ENCODE measurements at regions of chr15 and their contacts with region 1.

Region 1: DNA sequence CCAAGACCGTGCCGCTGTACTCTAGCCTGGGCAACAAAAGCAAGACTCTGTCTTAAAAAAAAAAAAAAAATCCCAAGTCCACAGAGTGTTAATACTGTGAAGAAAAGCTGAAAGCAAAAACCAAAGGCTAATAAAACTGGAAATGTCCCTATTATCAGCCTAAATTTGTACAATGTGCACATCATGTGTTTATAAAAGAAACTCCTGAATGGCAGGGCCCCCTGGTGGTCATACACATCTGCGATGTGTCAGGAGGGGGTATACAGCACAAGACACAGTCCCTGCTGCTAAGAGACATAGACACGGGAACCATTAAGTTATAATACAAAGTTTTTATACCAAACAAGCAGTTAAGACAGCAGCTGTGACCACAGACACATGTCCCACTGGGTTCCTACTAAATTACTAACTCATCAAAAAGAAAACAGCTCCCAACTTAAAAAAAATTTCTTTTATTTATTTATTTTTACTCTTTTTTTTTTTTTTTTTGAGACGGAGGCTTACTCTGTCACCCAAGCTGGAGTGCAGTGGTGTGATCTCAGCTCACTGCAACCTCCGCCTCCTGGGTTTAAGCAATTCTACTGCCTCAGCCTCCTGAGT is 31.0 kb downstream of the IDH2 start:
- DNase-seq: peak; percentile 82
- CTCF ChIP-seq: peak; percentile 63

Region 2: DNA sequence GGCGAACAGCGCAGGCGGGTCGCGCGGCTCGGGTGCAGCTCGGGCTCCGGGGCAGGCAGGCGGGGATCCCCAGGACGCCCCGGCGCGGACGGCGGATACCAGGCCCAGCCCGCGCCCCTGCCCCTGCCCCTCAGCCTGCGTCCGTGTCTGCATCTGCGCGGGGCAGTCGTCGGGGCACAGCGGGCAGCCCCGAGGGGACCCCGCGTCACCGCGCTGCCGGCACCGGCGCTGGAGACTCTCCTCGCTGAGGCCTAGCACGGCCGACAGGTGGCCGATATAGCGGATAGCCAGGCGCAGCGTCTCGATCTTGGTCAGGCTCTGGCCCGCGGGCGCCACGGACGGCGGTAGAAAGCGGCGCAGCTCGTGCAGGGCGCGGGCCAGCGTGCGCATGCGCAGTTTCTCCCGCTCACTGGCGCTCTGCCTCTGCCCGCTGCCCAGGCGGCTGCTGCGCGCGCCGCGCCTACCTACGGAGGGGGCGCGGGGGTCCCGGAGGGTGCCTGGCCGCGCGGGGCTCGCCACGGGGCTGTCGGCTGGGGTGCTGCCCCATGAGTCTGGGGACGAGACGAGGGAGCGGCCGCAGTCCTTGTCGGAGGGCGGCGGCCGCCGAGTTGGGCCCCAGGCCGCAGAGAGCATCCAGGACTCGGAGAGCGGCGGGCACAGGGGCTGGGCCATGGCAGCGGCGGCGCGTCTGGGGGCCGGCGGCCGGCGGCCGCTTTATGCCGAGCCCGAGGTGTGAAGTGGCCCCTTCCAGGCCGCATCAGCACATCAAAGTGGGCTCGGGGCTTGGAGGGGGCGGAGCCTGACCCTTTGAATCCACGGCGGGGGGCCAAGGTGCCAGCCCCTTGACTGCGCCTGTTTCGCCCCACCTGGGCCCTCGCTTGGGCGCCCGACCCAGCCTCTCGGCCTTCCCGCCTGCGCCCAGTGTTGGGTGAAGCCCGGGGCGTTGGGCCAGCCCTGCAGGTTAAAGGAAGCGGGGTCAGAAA is 320.5 kb before region 1 on chr15 and contains the start of gene MESP1:
- in situ Hi-C with region 1: loop called (anchors 10 kb)
- DNase-seq: peak; percentile 97
- CTCF ChIP-seq: peak; percentile 81

Region 3: GRCh38 chr15:89776274-89777072 is 294.8 kb before region 1 on chr15 and contains the start of gene MESP2:
- in situ Hi-C with region 1: no loop called
- DNase-seq: peak; percentile 92
- CTCF ChIP-seq: no peak

Region 4: DNA sequence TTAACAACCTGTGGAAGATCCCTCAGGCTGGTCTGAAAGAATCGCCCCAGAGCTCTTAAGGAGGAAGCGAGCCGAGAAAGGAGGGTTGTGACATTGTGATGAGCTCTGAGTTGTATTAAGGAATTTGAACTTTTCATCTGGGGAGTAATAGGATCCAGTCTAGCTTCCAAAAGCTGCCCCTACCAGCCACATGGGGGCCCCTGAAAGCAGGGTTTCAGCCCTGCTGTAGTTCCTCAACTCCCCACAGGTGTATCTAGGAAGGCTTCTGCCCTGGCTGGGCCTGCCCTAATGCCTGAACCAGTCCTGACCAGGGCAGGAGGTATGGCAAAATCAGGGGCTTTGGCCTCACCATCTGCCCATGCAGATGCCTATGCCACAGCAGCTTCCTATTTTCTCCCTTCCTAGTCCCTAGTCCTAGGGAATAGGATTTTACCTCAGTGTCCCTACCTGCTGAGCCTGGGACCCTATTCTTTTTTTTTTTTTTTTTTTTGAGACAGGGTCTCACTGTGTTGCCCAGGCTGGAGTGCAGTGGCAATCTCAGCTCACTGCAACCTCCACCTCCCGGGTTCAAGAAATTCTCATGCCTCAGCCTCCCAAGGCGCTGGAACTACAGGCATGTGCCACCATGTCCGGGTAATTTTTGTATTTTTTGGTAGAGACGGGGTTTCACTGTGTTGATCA is 172.6 kb before region 1 on chr15:
- in situ Hi-C with region 1: loop called (anchors 5 kb)
- DNase-seq: peak; percentile 75
- CTCF ChIP-seq: peak; percentile 49

Region 5: GRCh38 chr15:90002428-90002844 is 68.9 kb before region 1 on chr15:
- in situ Hi-C with region 1: no loop called
- DNase-seq: peak; percentile 71
- CTCF ChIP-seq: no peak